Naive thymus-derived CD8-positive, alpha-beta T cell (primary cell): ENCODE measurements at regions of chr10 and their contacts with region 1.

Region 1: DNA sequence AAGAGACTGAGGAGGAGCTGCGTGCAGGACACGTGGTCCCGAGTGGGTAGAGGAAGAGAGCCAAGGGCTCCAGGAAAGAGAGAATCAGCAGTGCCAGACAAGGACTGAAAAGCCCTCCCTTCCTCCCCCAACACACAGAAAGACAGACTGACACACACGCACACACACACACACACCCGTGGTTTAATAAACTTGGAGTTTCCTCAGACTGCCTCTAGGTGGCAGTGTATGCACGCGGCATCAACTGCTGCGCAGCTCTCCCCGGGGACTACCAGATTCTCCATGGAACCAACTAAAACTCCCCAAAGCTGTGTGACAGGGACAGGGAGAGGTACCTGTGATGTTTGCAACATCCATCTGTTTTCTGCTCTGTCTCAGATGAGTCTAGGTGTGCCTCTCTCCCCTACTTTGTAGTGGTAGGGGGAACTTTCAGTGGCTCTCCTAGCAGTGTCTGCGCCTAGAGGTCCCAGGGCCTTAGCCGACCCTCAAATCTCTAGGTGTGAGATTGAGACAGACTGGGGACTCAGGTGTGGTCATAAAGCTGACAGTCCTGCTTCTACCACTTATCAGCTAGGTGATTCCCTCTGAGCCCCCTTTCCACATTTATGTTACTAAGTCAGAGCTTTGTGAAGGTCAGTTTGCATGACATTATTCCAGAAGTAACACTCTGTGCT is 9.3 kb upstream of the TSPAN14 start:
- DNase-seq: peak in 9 of 10 donors; percentile 38 to 86 (median 74)
- ATAC-seq: peak; percentile 84 to 89
- H3K4me3 Mint-ChIP-seq: peak overlapping the region in 9 of 10 donors; percentile 8 to 83 (median 49)
- H3K27ac Mint-ChIP-seq: peak overlapping the region; percentile 1 to 96 (median 82)
- H3K4me1 Mint-ChIP-seq: peaks cover 31 to 64% (median 56%) of the 10 kb centered on the region in 4 donors
- H3K27me3 Mint-ChIP-seq: no peaks in the 10 kb centered on the region

Region 2: DNA sequence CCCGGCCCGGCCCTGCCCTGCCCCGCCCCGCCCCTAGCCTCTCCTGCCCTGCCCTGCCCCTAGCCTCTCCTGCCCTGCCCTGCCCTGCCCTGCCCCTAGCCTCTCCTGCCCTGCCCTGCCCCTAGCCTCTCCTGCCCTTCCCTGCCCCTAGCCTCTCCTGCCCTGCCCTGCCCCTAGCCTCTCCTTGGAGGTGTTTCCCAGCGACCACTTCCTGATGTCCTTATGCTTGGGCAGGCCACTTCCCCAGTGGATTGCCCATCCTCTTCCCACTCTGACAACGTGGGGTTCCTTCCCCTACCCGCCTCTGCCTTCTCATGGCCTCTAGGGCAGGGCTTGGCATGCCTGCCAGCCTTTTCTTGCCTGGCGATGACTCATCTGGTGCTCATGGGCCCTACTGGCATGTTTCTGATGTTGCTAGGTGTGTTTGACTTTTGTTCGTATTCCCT is 15.2 kb before region 1 on chr10:
- POLR2A ChIA-PET with region 1: no interaction called
- DNase-seq: no peak
- ATAC-seq: no peak
- H3K4me3 Mint-ChIP-seq: no peak overlapping the region
- H3K27ac Mint-ChIP-seq: no peak overlapping the region
- H3K4me1 Mint-ChIP-seq: peaks cover 0 to 4% (median 0%) of the 10 kb centered on the region in 4 donors
- H3K27me3 Mint-ChIP-seq: no peaks in the 10 kb centered on the region

Region 3: DNA sequence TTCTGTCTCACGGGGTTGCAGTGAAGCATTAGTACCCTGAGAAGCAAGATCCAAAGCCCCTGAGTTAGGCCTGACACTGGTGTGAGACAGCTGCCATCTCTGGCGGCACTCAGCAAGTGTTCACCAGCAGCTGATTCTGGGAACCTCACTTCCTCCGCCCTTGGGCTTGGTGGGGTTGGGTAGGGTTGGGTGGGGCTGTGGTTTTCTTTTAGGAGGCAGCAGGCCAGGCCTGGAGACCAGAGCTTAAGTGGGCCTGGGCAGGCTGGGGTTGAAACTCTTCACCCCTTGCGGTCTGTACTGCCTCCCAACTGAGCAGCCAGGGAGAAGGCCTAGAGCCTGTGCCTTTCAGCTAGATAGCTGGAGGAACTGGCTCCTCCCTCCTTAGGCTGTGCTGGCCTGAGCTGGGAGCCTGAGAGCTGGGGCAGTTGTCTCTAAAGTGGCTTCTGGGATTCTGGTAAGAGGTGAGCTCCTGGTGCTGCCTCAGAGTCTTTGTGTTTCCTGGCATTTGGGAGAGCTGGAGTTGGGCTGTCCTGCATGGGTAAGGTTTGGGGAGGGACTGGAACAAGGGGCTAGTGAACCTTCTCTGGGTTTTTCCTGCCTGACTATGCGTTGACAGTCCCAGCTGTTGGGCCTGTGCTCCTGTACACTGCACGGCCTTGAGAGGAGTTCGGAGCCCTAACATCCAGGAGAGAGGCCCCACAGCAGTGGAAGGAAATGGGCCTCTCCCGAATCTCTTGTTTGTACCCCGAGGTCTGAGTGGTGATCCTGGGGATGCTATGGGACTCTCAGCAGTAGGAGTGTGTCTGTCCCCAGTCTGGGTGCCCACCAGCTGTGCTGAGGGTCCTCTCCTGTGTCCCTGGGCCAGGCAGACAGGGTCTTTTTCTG is 14.5 kb after region 1 on chr10:
- POLR2A ChIA-PET with region 1: interaction called, 382 read pairs
- DNase-seq: peak in 9 of 10 donors; percentile 39 to 78 (median 60)
- ATAC-seq: peak; percentile 48 to 64
- H3K4me3 Mint-ChIP-seq: peak overlapping the region in 9 of 10 donors; percentile 80 to 99 (median 98)
- H3K27ac Mint-ChIP-seq: peak overlapping the region; percentile 91 to 100 (median 97)
- H3K4me1 Mint-ChIP-seq: peaks cover 54 to 93% (median 82%) of the 10 kb centered on the region in 4 donors
- H3K27me3 Mint-ChIP-seq: no peaks in the 10 kb centered on the region

Region 4: GRCh38 chr10:80487791-80488538 is 43.2 kb after region 1 on chr10:
- POLR2A ChIA-PET with region 1: interaction called, 21 read pairs
- DNase-seq: peak in 8 of 10 donors; percentile 42 to 80 (median 64)
- ATAC-seq: peak; percentile 72 to 79
- H3K4me3 Mint-ChIP-seq: peak overlapping the region; percentile 71 to 91 (median 80)
- H3K27ac Mint-ChIP-seq: peak overlapping the region; percentile 83 to 98 (median 95)
- H3K4me1 Mint-ChIP-seq: peaks cover 60 to 98% (median 93%) of the 10 kb centered on the region in 4 donors
- H3K27me3 Mint-ChIP-seq: no peaks in the 10 kb centered on the region

Region 5: GRCh38 chr10:80498833-80499741 is 54.3 kb after region 1 on chr10:
- POLR2A ChIA-PET with region 1: interaction called, 914 read pairs
- DNase-seq: peak in 2 of 10 donors; percentile 21 to 43
- ATAC-seq: peak; percentile 13 to 32
- H3K4me3 Mint-ChIP-seq: peak overlapping the region; percentile 64 to 87 (median 84)
- H3K27ac Mint-ChIP-seq: peak overlapping the region; percentile 91 to 98 (median 95)
- H3K4me1 Mint-ChIP-seq: peaks cover 65 to 99% (median 96%) of the 10 kb centered on the region in 4 donors
- H3K27me3 Mint-ChIP-seq: no peaks in the 10 kb centered on the region